Heart left ventricle (tissue), 16 donors: ENCODE measurements at regions of chr20 and their contacts with region 1.

Region 1: DNA sequence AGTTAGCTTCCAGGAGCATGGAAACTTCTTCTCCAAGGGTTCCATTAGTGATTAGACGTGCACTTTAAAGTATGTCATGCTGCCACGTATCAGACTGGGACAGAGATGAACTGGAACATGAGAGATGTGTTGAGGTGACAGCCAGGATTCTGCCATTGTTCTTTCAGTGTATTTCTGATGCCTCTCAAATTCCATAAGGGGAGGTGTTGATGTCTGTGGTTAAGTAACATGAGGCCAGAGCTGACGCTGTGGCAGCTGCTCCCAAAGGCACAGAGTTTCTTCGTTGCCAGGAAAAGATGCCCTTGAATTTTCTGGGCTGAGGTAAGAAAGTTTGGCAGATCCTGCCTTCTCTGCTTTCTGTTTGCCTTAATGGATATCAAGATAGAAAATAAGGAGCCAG is 63.5 kb downstream of the TRMT6 start:
- DNase-seq: peak in 2 of 5 donors; percentile 43 to 64
- ATAC-seq: peak; percentile 86 to 96 (median 92)
- H3K4me3 ChIP-seq: no peak overlapping the region
- H3K27ac ChIP-seq: peak overlapping the region in 11 of 12 donors; percentile 7 to 89 (median 63)
- H3K4me1 ChIP-seq: peaks cover 0 to 22% (median 1%) of the 10 kb centered on the region in 12 donors
- H3K27me3 ChIP-seq: no peaks in the 10 kb centered on the region
- CTCF ChIP-seq: no peak
- POLR2A ChIP-seq: no peak

Region 2: GRCh38 chr20:5835321-5835821 is 51.4 kb before region 1 on chr20:
- intact Hi-C with region 1: loop called in 4 of 10 experiments (anchors 2 to 10 kb)
- DNase-seq: peak in 4 of 5 donors; percentile 25 to 65 (median 28)
- ATAC-seq: peak in 3 of 4 donors; percentile 49 to 72 (median 64)
- H3K4me3 ChIP-seq: no peak overlapping the region
- H3K27ac ChIP-seq: peak overlapping the region in 11 of 12 donors; percentile 31 to 88 (median 61)
- H3K4me1 ChIP-seq: peaks cover 0 to 44% (median 24%) of the 10 kb centered on the region in 12 donors
- H3K27me3 ChIP-seq: no peaks in the 10 kb centered on the region
- CTCF ChIP-seq: no peak
- POLR2A ChIP-seq: no peak